ENCODE measurements at regions of chr6 and their contacts with region 1.

Region 1: GRCh38 chr6:28124102-28124970 is at the start of gene ZSCAN16:
- DNase-seq: peak; percentile 91
- H3K4me3 Mint-ChIP-seq: peak within 1 kb of the TSS; percentile 85
- H3K27ac Mint-ChIP-seq: peak within 1 kb of the TSS; percentile 48
- H3K4me1 Mint-ChIP-seq: peaks cover 22% of the 10 kb centered on the region
- H3K27me3 Mint-ChIP-seq: no peaks in the 10 kb centered on the region
- CTCF ChIP-seq: no peak
- total RNA-seq, gene ZSCAN16: 14.2 and 15.9 TPM in 2 replicates

Region 2: DNA sequence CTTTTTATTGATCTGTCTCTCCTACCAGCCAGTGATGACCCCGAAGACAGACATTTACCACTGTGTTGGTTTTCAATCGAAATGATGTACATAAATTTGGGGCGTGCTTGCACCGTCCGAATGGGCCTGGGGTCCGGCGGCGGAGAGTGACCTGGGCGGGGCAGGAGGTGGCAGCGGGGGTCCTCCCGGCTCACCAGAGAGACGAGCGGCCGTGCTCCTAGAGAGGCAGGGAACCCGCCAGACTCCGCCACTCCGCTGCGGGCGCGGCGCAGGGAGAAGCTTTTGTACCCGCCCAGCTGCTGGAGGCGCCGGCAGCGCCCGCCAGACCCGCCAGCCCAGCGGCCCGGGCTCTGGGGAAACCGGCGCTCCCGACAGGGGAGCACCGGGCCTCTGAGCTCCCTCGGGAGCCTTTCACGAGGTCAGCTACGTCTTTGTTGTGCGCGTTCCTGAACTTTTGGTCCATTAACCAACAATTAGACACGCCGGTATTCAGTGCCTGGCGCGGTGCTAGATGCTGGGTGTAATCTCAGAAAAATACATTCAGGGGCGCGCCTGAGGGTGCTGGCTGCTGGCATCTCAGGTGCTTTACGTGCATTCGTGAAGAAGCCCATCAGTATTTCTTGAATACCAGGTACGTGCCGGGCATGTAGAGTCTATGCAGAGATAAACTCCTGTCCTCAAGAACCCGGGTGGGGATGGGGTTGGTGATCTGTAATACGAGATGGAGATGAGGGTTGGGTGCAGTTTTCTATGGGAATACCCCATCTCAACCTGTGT is 157.1 kb after region 1 on chr6 and contains the start of gene PGBD1:
- CTCF ChIA-PET with region 1: no interaction called
- intact Hi-C with region 1: no loop called
- DNase-seq: peak; percentile 86
- H3K4me3 Mint-ChIP-seq: peak within 1 kb of the TSS; percentile 91
- H3K27ac Mint-ChIP-seq: peak within 1 kb of the TSS; percentile 53
- H3K4me1 Mint-ChIP-seq: peaks cover 10% of the 10 kb centered on the region
- H3K27me3 Mint-ChIP-seq: no peaks in the 10 kb centered on the region
- CTCF ChIP-seq: no peak
- total RNA-seq, gene PGBD1: 3.1 and 4.9 TPM in 2 replicates

Region 3: GRCh38 chr6:28383235-28384142 is 259.2 kb after region 1 on chr6:
- CTCF ChIA-PET with region 1: no interaction called
- intact Hi-C with region 1: loop called (anchors 1 kb)
- DNase-seq: peak; percentile 90
- H3K4me3 Mint-ChIP-seq: peak overlapping the region; percentile 85
- H3K27ac Mint-ChIP-seq: peak overlapping the region; percentile 88
- H3K4me1 Mint-ChIP-seq: peaks cover 13% of the 10 kb centered on the region
- H3K27me3 Mint-ChIP-seq: no peaks in the 10 kb centered on the region
- CTCF ChIP-seq: peak; percentile 77

Measured in Calu3 (cell line).